ENCODE measurements at regions of chr11 and their contacts with region 1.

Region 1: GRCh38 chr11:11848891-11849746 is 7.3 kb downstream of the USP47 start:
- DNase-seq: peak; percentile 78
- H3K4me3 Mint-ChIP-seq: no peak overlapping the region
- H3K27ac Mint-ChIP-seq: peak overlapping the region; percentile 57
- H3K4me1 Mint-ChIP-seq: peaks cover 69% of the 10 kb centered on the region
- H3K27me3 Mint-ChIP-seq: no peaks in the 10 kb centered on the region

Region 2: DNA sequence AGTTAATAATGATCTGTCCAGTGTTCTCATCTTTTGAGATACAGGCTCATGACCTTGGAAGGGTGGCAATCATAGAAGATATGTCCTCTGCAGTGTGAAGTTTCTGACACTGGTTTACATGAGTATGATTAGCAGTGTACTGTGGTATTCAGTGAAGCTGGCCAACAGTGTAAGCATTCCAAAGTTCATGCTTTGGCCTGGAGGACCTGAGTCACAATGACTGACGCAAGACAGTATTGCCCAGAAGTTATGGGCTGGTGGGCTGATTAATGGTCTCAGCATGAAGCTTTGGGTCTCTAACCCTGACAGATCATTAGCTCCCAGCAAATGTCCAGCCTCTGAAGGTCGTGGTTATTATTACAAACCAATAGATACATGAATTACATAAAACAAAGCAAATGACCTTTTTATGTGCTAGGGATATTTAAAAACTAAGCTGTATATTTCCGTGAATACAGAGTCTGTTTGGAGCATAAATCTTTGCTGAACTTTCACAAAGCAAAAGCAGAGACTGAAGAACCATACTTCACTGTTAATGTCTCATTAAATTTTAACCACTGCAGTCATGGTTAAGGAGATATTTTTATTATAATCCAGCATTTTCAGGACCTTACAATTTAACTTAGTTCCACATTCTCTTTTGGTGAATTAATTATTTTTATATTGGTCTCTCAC is 35.7 kb before region 1 on chr11:
- CTCF ChIA-PET with region 1: no interaction called
- POLR2A ChIA-PET with region 1: no interaction called
- DNase-seq: no peak
- H3K4me3 Mint-ChIP-seq: no peak overlapping the region
- H3K27ac Mint-ChIP-seq: no peak overlapping the region
- H3K4me1 Mint-ChIP-seq: no peaks in the 10 kb centered on the region
- H3K27me3 Mint-ChIP-seq: peaks cover under 1% of the 10 kb centered on the region

Region 3: DNA sequence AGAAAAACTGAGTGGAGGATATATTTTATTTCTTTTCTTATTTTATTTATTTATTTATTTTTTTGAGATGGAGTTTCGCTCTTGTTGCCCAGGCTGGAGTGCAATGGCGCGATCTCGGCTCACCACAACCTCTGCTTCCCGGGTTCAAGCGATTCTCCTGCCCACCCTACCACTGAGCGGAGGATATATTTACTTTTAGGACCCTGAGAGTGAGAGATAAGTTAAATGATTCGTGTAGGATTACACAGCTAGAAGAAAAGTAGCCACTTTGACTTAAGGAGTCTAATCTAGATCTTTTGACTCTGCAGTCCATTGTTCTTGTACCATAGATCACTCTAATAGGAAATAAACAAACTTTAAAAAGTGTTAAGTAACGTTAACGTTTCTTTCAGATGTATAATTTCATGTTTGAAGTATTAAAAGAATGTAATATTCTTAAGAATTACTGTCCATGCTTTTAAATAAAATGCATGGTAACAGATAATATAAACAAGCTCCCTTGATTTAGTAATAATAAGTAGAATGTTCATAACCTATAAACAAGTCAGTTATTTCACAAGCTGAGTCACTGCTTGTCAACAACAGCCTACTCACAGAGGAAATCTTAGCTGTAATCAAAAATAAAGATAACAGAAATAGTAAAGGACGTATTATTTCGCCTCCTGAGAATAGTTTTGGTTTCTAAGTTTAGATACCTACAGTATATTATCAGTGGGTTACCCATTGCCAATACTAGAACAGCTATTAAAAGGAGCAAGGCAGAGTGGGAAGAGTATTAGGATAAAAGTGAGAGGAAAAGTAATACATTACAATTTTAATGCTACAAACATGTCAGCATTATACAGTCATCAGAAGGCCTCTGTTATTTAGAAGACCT is 11.2 kb after region 1 on chr11:
- CTCF ChIA-PET with region 1: interaction called, 10 read pairs
- POLR2A ChIA-PET with region 1: no interaction called
- DNase-seq: no peak
- H3K4me3 Mint-ChIP-seq: no peak overlapping the region
- H3K27ac Mint-ChIP-seq: no peak overlapping the region
- H3K4me1 Mint-ChIP-seq: peaks cover 43% of the 10 kb centered on the region
- H3K27me3 Mint-ChIP-seq: no peaks in the 10 kb centered on the region

Measured in activated CD4-positive, alpha-beta T cell treated with anti-CD3 and anti-CD28 coated beads, Interleukin-2, amount 10 ng/mL, durations not matched to agents 7 days and 5 days (primary cell).